ENCODE measurements at regions of chr10 and their contacts with region 1.

Region 1: GRCh38 chr10:72124989-72125388 is 36.6 kb upstream of the SPOCK2 start:
- DNase-seq: no peak
- H3K4me3 ChIP-seq: no peak overlapping the region
- H3K27ac ChIP-seq: no peak overlapping the region
- H3K4me1 ChIP-seq: peaks cover 0 to 5% (median 1%) of the 10 kb centered on the region in 6 donors
- H3K27me3 ChIP-seq: no peaks in the 10 kb centered on the region
- CTCF ChIP-seq: no peak
- POLR2A ChIP-seq: no peak

Region 2: DNA sequence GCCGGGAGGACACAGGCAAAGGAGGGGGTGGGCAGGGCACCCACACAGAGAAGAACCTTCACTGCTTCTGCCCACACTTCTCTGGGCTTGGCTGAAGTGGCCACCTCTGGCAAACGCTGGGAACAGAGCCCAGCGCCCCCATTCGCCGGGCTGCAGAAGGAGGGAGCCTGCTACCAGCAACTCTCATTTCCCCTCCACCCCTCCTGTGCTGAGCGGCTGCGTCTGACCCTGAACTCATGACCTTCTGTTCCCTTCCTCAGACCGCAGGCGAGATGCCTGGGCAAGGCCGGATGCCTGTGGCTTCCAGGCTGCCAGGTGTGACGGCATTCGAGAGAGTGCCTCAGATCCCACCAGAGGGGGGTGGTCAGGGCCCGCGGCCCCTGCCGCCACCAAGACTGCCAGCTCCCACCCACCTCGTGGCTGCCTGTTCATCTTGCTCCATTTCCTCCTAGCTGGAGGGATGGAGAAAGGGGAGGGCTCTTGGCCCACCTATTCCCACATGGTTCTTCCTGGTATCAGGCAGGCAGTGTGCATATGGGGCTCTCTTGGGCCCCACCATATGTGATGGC is 209.9 kb after region 1 on chr10:
- intact Hi-C with region 1: loop called (anchors 2 kb)
- DNase-seq: peak; percentile 99
- H3K4me3 ChIP-seq: peak overlapping the region in 5 of 8 donors; percentile 2 to 57 (median 7)
- H3K27ac ChIP-seq: peak overlapping the region; percentile 84 to 98 (median 95)
- H3K4me1 ChIP-seq: peaks cover 68 to 82% (median 78%) of the 10 kb centered on the region in 6 donors
- H3K27me3 ChIP-seq: no peaks in the 10 kb centered on the region
- CTCF ChIP-seq: peak in 10 of 11 experiments; percentile 5 to 56 (median 40)
- POLR2A ChIP-seq: peak in 1 of 3 donors; percentile 17

Region 3: DNA sequence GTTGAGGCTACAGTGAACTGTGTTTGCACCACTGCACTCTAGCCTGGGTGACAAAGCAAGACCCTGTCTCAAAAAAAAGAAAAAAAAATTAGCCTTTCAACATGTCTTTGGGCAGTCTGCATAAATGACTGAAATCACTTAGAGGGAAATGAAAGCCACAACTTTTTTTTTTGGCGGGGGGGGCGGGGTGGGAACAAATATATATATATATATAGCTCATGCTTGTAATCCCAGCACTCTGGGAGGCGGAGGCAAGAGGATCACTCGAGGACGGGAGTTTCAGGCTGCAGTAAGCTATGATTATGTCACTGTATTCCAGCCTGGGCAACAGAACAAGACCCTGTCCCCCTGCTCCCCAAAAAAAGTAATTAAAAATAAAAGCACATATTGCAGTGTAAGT is 524.3 kb after region 1 on chr10:
- intact Hi-C with region 1: no loop called
- DNase-seq: no peak
- H3K4me3 ChIP-seq: no peak overlapping the region
- H3K27ac ChIP-seq: no peak overlapping the region
- H3K4me1 ChIP-seq: peaks cover 0 to 8% (median 0%) of the 10 kb centered on the region in 6 donors
- H3K27me3 ChIP-seq: no peaks in the 10 kb centered on the region
- CTCF ChIP-seq: no peak
- POLR2A ChIP-seq: no peak

Measured in spleen (tissue), 13 donors.